ENCODE measurements at regions of chr11 and their contacts with region 1.

Region 1: DNA sequence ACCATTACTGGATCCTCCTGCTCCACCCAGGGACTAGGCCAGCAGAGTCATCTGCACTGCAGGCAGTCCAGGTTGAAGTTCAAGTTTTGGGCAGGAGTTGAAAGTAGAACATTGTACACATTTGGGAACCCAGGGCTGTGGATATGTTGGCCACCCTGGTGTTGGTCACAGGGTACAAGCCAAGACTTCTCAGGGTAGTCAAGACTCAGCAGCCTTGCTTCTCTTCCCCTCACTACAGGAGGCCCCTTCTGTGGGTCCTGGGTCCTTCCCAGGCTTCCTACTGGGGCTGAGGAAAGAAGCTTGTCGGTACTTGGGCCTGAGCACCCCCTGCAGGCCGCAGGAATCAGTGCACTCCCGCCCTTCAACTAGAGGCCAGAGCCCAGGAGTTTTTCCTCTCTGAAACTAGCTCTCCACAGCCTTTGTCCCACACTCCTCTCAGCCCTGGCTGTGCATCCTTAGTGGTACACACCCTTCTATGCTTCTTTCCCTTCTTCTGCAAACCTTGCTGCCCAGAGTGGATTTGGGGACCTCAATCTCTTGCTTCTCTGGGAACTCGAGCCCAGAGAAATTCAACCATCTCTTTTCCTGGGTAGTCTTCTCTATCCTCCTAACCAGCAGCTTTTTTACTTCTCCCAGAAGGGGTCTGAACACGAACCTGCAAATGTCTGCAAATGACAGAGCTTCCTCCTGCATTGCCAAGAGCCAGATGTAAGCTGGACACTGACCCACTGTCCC is 2.6 kb upstream of the HPX start:
- DNase-seq: peak; percentile 28 to 67 (median 53)
- ATAC-seq: peak; percentile 87
- H3K4me3 ChIP-seq: no peak overlapping the region
- H3K4me3 Mint-ChIP-seq: no peak overlapping the region
- H3K27ac ChIP-seq: no peak overlapping the region
- H3K27ac Mint-ChIP-seq: no peak overlapping the region
- H3K4me1 ChIP-seq: peaks cover 12 to 19% of the 10 kb centered on the region in 2 donors
- H3K4me1 Mint-ChIP-seq: peaks cover 0 to 5% (median 0%) of the 10 kb centered on the region in 7 donors
- H3K27me3 ChIP-seq: no peaks in the 10 kb centered on the region
- H3K27me3 Mint-ChIP-seq: peaks cover 0 to 12% (median 0%) of the 10 kb centered on the region in 5 donors

Region 2: DNA sequence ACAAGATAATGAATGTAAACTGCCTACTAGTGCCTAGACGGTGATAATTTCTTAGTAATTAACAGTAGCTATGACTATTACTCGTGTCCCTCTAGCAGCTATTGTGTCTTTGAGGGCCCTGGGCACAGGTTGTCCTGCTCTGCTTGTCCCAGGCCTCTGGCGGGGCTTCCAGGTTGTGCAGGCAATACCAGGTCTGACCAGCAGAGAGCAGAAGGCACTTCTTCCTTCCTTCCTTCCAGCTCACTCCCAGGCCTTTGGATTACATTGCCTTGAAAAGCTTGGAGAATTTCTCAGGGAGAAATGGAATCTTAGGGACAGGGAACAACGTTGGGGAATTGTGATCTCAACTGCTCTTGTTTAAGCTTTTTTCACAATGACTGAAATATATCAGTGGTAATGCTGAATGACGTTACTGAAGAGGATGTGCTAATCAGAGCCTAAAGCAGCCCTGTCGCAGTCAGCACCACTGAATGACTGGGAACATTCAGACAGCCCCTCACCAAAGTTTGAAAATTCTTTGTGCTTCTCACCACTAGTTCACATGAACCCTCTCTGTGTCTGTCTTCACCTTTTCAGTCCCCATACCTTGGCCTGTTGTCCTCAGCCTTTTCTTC is 192.2 kb before region 1 on chr11:
- CTCF ChIA-PET with region 1: no interaction called
- POLR2A ChIA-PET with region 1: no interaction called
- intact Hi-C with region 1: loop called in 1 of 2 experiments (anchors 5 kb)
- DNase-seq: peak in 5 of 9 donors; percentile 21 to 51 (median 27)
- ATAC-seq: peak; percentile 71
- H3K4me3 ChIP-seq: no peak overlapping the region
- H3K4me3 Mint-ChIP-seq: no peak overlapping the region
- H3K27ac ChIP-seq: no peak overlapping the region
- H3K27ac Mint-ChIP-seq: no peak overlapping the region
- H3K4me1 ChIP-seq: no peaks in the 10 kb centered on the region
- H3K4me1 Mint-ChIP-seq: no peaks in the 10 kb centered on the region
- H3K27me3 ChIP-seq: no peaks in the 10 kb centered on the region
- H3K27me3 Mint-ChIP-seq: peaks cover 0 to 17% (median 0%) of the 10 kb centered on the region in 5 donors

Region 3: DNA sequence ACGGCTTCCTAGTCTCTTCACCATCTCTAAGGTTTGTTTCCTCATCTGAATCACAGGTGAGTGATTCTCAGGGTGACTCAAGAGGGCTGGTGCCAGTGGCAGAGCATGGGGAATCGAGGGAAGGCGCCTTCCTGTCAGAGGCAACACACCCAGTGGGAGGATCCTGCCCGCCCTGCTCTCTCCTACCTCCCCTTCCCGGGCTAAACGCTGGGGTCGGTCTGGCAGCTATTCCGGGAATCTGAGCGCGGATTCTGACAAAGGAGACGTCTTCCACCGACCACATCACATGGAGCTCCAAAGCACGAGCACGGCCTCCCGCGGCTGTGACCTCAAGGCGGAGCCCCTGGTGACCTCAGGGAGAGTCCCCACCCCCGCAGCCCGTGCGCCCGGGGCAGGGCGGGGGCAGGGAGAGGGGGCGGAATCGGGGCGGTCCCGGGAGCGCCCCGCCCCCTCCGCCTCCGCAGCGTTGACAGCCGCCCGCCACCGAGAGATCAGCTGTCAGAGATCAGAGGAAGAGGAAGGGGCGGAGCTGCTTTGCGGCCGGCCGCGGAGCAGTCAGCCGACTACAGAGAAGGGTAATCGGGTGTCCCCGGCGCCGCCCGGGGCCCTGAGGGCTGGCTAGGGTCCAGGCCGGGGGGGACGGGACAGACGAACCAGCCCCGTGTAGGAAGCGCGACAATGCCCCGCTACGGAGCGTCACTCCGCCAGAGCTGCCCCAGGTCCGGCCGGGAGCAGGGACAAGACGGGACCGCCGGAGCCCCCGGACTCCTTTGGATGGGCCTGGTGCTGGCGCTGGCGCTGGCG is 53.3 kb before region 1 on chr11 and contains the start of gene SMPD1:
- CTCF ChIA-PET with region 1: interaction called, 573 read pairs
- POLR2A ChIA-PET with region 1: interaction called, 8 read pairs
- intact Hi-C with region 1: loop called (anchors 2 kb)
- DNase-seq: peak; percentile 85 to 94 (median 92)
- ATAC-seq: peak; percentile 97
- H3K4me3 ChIP-seq: peak within 1 kb of the TSS; percentile 94
- H3K4me3 Mint-ChIP-seq: peak within 1 kb of the TSS; percentile 91 to 98 (median 94)
- H3K27ac ChIP-seq: peak within 1 kb of the TSS; percentile 95
- H3K27ac Mint-ChIP-seq: peak within 1 kb of the TSS; percentile 93 to 100 (median 99)
- H3K4me1 ChIP-seq: peaks cover 25 to 53% of the 10 kb centered on the region in 2 donors
- H3K4me1 Mint-ChIP-seq: peaks cover 31 to 74% (median 66%) of the 10 kb centered on the region in 7 donors
- H3K27me3 ChIP-seq: no peaks in the 10 kb centered on the region
- H3K27me3 Mint-ChIP-seq: peaks cover 0 to 13% (median 0%) of the 10 kb centered on the region in 5 donors
- total RNA-seq, gene SMPD1: 43.0 to 70.9 (median 55.4) TPM

Region 4: DNA sequence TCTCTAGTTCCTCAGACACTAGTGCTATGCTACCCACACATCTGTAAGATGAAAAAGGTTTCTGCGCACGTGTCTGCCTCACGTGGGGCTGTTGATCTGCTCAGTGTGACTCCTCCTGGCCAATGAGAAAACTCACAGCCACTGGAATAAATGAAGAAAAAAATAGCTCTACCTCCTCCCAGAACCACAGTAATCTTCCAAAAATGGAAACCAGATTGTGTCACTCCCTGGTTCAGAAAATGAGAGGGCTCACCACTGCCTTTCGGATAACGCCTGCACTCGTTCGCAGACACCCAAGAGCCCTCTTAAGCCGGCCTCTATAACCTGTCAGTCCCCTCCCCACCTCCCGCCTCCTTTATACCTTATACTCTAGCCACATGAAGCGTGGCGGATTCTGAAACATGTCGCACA is 29.6 kb before region 1 on chr11:
- CTCF ChIA-PET with region 1: interaction called, 12 read pairs
- POLR2A ChIA-PET with region 1: interaction called, 16 read pairs
- intact Hi-C with region 1: loop called (anchors 1 to 2 kb)
- DNase-seq: peak in 7 of 9 donors; percentile 78 to 91 (median 88)
- ATAC-seq: peak; percentile 90
- H3K4me3 ChIP-seq: peak overlapping the region; percentile 28
- H3K4me3 Mint-ChIP-seq: no peak overlapping the region
- H3K27ac ChIP-seq: peak overlapping the region; percentile 74
- H3K27ac Mint-ChIP-seq: no peak overlapping the region
- H3K4me1 ChIP-seq: peaks cover 31 to 81% of the 10 kb centered on the region in 2 donors
- H3K4me1 Mint-ChIP-seq: peaks cover 0 to 36% (median 17%) of the 10 kb centered on the region in 7 donors
- H3K27me3 ChIP-seq: no peaks in the 10 kb centered on the region
- H3K27me3 Mint-ChIP-seq: no peaks in the 10 kb centered on the region

Region 5: GRCh38 chr11:6431861-6432260 is 11.6 kb before region 1 on chr11:
- CTCF ChIA-PET with region 1: interaction called, 15 read pairs
- POLR2A ChIA-PET with region 1: interaction called, 3 read pairs
- intact Hi-C with region 1: no loop called
- DNase-seq: no peak
- ATAC-seq: no peak
- H3K4me3 ChIP-seq: no peak overlapping the region
- H3K4me3 Mint-ChIP-seq: no peak overlapping the region
- H3K27ac ChIP-seq: no peak overlapping the region
- H3K27ac Mint-ChIP-seq: no peak overlapping the region
- H3K4me1 ChIP-seq: no peaks in the 10 kb centered on the region
- H3K4me1 Mint-ChIP-seq: peaks cover 4 to 20% (median 6%) of the 10 kb centered on the region in 7 donors
- H3K27me3 ChIP-seq: no peaks in the 10 kb centered on the region
- H3K27me3 Mint-ChIP-seq: peaks cover 0 to 16% (median 0%) of the 10 kb centered on the region in 5 donors

Region 6: DNA sequence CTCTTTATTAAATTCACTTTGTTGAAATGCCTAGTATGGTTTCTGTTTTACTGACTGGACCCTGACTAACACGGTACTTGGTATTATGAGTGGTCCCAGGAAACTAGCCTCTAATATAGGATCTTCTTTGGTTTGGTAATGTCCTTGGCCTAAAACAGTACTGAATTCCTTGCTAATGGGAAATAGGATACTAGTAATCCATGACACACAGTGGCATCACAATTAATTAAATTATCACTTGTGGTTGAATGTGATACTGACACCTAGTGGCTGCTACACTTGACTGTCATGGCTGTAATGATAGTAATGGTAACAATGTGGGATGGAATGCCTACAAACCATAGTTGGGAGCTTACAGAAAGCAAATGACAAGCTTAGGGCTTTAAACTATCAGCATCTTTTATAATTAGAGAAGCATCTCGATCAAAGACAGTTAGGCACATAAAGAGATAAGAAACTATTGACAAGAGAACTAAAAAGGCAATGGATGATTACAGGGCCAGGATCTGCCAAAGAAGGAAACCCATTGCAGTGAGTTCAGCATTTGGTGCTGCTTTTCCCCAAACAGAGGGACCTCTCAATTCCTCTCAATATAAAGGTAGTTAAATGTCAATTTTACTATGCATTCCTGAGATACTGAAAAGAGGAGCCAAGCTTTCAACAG is 62.3 kb after region 1 on chr11:
- CTCF ChIA-PET with region 1: interaction called, 11 read pairs
- POLR2A ChIA-PET with region 1: no interaction called
- intact Hi-C with region 1: loop called (anchors 1 to 2 kb)
- DNase-seq: peak in 5 of 9 donors; percentile 20 to 45 (median 31)
- ATAC-seq: peak; percentile 83
- H3K4me3 ChIP-seq: no peak overlapping the region
- H3K4me3 Mint-ChIP-seq: no peak overlapping the region
- H3K27ac ChIP-seq: no peak overlapping the region
- H3K27ac Mint-ChIP-seq: peak overlapping the region in 1 of 9 donors; percentile 8
- H3K4me1 ChIP-seq: no peaks in the 10 kb centered on the region
- H3K4me1 Mint-ChIP-seq: peaks cover 4 to 12% (median 6%) of the 10 kb centered on the region in 7 donors
- H3K27me3 ChIP-seq: no peaks in the 10 kb centered on the region
- H3K27me3 Mint-ChIP-seq: no peaks in the 10 kb centered on the region

Region 7: GRCh38 chr11:7034019-7034418 is 590.6 kb after region 1 on chr11:
- CTCF ChIA-PET with region 1: no interaction called
- POLR2A ChIA-PET with region 1: no interaction called
- intact Hi-C with region 1: no loop called
- DNase-seq: no peak
- ATAC-seq: no peak
- H3K4me3 ChIP-seq: no peak overlapping the region
- H3K4me3 Mint-ChIP-seq: no peak overlapping the region
- H3K27ac ChIP-seq: no peak overlapping the region
- H3K27ac Mint-ChIP-seq: no peak overlapping the region
- H3K4me1 ChIP-seq: no peaks in the 10 kb centered on the region
- H3K4me1 Mint-ChIP-seq: no peaks in the 10 kb centered on the region
- H3K27me3 ChIP-seq: no peaks in the 10 kb centered on the region
- H3K27me3 Mint-ChIP-seq: peaks cover 0 to 5% (median 4%) of the 10 kb centered on the region in 5 donors

Measured in naive thymus-derived CD4-positive, alpha-beta T cell (primary cell).